AG04450 (cell line): ENCODE measurements at regions of chr10 and their contacts with region 1.

Region 1: DNA sequence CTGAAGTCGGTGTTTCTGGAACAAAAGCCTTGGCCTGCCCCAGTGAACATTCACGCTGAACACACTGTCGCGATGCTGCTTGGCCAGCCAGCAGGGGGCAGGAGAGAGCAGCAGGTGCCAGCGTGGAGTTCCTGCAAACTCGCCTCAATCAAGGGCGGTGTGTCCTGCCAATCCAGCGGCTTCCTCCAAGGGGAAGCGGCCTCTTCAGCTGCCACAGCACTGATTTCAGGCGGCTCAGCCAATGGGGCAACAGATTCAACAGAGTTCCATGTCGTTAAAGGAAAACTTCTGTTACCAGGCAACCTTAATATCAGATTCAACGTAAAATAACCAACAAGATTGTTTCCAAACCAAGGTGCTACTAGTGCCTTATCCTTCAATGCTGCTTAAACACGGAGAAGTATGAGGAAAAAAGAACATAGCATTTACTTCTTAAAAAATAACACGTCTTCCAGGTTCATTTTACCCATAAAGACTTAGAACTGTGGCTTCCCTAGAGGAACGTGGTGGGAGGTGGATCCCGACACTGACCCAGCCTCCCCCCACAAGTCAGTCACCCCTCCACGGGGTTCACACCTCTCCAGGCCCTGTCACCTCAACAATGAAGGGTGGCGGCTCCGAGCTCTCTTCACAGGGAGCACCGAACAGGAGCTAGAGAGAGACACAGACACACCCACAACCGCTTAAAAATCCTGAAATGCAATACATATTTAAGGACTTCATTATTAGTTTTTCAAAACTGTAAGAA is 178.2 kb downstream of the DIP2C start:
- DNase-seq: peak; percentile 87
- H3K4me3 ChIP-seq: no peak overlapping the region
- H3K27ac ChIP-seq: no peak overlapping the region
- H3K27me3 ChIP-seq: no peaks in the 10 kb centered on the region
- CTCF ChIP-seq: peak; percentile 98

Region 2: DNA sequence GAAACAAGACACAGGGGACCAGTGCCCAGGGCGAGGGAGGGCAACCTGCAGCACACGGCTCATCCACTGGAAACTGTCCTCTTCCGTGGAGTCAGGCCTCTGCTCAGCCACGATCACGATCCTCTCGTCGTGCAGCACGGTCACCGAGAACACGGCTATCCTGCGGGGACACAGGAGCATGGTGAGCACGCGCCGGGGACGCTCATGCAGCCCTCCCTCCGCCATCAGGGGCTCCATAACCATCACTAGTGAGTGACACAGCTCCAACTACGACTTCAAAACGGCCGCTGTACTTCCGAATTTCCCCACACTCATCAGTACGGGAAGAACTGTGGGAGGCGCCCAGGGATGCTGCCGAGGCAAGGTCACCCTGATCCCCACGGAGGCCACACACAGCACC is 148.1 kb before region 1 on chr10:
- CTCF ChIA-PET with region 1: no interaction called
- POLR2A ChIA-PET with region 1: no interaction called
- DNase-seq: no peak
- H3K4me3 ChIP-seq: no peak overlapping the region
- H3K27ac ChIP-seq: no peak overlapping the region
- H3K27me3 ChIP-seq: no peaks in the 10 kb centered on the region
- CTCF ChIP-seq: no peak

Region 3: DNA sequence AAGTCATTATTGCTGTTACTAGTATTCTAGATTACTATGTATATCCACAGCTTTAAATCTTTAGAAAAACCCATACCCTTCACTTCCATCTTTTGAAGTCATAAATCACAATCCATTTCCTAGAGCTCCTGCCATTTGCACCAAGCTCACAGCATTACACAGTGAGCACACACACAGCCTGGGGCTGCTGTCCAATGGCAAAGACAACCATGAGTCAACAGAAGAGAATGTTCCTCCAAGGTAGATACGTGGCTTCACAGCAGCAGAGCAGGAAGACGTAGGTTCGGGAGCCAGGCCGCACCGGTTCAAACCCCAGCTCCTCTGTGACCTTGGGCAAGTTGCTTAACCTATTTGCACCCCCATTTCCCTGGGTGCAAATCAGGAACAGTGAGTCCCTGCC is 56.4 kb before region 1 on chr10:
- CTCF ChIA-PET with region 1: no interaction called
- POLR2A ChIA-PET with region 1: no interaction called
- DNase-seq: peak; percentile 54
- H3K4me3 ChIP-seq: no peak overlapping the region
- H3K27ac ChIP-seq: peak overlapping the region; percentile 81
- H3K27me3 ChIP-seq: no peaks in the 10 kb centered on the region
- CTCF ChIP-seq: no peak

Region 4: GRCh38 chr10:500876-501275 is 10.4 kb before region 1 on chr10:
- CTCF ChIA-PET with region 1: interaction called, 25 read pairs
- POLR2A ChIA-PET with region 1: interaction called, 3 read pairs
- DNase-seq: no peak
- H3K4me3 ChIP-seq: no peak overlapping the region
- H3K27ac ChIP-seq: no peak overlapping the region
- H3K27me3 ChIP-seq: no peaks in the 10 kb centered on the region
- CTCF ChIP-seq: no peak

Region 5: GRCh38 chr10:580778-581177 is 69.5 kb after region 1 on chr10:
- CTCF ChIA-PET with region 1: no interaction called
- POLR2A ChIA-PET with region 1: interaction called, 11 read pairs
- DNase-seq: peak; percentile 70
- H3K4me3 ChIP-seq: no peak overlapping the region
- H3K27ac ChIP-seq: peak overlapping the region; percentile 90
- H3K27me3 ChIP-seq: no peaks in the 10 kb centered on the region
- CTCF ChIP-seq: no peak

Region 6: DNA sequence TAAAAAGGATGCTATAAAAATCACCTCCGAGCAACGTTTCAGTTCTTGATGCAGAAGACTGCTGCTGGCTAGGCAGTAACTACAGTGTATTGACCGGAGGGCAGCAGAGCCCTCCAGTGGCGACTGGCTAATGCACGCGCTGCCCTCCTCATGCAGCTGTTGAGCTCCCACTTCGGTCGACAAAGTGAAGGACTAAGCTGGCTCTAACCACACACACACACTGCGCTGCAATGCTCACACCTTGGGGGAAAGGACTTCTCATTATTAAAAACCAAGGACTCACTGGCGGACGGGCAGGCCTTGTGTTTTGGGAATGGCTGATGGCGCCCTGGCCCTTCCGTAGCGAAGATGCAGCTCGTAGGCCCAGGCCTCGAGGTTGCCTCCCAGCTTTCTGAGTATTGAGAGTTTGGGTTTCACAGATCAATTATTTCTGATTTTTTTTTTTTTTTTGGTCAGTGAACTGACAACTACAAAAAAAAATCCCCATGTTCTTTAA is 299.1 kb after region 1 on chr10:
- CTCF ChIA-PET with region 1: interaction called, 16 read pairs
- POLR2A ChIA-PET with region 1: no interaction called
- DNase-seq: no peak
- H3K4me3 ChIP-seq: no peak overlapping the region
- H3K27ac ChIP-seq: no peak overlapping the region
- H3K27me3 ChIP-seq: no peaks in the 10 kb centered on the region
- CTCF ChIP-seq: peak; percentile 48